Left cardiac atrium (tissue), 4 donors: ENCODE measurements at regions of chr16 and their contacts with region 1.

Region 1: GRCh38 chr16:9434659-9435058 is 343.2 kb downstream of the HAPSTR1 start:
- DNase-seq: no peak
- ATAC-seq: no peak

Region 2: DNA sequence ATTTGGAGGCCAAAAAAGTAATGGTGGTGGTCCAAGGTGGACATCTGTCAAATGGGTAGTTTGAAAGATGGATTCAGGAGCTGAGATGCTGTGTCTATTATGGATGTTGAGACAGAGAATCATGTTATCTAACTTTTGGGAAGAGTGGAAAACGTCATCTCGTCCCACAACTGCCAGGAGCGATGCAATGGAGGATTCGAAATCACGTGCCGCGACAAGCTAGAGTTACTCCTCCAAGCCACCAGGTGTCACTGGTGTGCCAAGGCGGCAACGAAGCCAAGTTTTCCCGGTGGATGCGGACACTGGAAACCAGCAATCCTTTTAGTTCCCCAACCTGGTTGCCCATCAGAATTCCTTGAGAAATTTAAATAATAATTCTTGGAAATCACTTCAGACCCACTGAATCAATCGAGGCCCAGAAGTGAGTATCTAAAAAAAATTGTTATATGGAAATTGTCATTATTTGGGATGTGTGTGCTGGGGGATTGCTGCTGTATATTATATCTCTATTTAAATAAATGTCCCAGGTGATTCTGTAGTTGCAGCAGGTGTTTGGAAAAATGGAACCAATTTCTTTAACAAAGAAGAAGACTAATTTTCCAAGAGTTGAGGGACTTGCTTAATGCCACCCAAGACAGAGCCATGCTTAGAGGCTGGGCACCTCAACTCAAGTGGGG is 137.1 kb before region 1 on chr16:
- intact Hi-C with region 1: loop called in 1 of 2 experiments (anchors 5 kb)
- DNase-seq: peak; percentile 36
- ATAC-seq: no peak